ENCODE measurements at regions of chr6 and their contacts with region 1.

Region 1: DNA sequence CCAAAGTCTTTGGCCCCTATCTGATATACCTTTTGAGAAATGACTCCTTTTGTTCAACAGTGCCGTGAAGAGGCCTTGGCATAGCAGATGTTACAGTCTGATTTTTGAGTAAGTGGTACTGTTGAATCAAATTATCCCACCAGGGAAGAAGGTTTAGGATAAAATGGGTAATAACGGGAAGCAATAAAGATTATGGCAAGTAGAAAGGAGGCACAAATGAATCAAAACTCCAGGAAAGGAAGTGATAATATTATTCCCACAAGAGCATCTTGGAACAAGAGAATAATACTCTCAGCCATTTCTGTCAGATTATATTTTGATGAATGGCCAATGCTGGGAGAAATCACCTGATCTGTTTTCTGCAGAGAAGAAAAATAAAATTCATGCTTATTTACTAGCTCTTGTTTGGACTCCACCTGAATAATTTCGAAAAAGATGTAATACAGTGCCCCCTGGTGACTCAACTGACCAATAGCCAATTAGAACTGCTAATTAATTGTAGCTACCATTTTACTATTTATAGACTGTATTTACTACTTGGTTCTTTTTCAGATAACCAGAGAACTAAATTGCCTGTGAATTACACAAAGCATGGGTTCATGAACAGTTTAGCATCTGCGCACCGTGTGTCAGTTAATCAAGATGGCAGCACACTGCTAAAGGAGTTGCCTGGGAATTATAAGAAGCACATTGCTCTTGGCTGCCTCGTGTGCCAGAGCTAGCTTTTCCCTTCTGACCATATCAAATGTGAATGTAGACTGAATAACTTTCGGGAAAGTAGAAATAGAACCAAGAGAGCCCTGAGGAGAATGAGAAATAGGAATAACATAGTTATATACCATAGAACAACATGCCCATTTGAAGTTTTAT is 78.5 kb upstream of the TRDN start:
- DNase-seq: peak; percentile 39
- ATAC-seq: peak; percentile 58
- H3K4me3 ChIP-seq: no peak overlapping the region
- H3K27ac ChIP-seq: no peak overlapping the region
- H3K4me1 ChIP-seq: no peaks in the 10 kb centered on the region
- H3K27me3 ChIP-seq: no peaks in the 10 kb centered on the region
- CTCF ChIP-seq: peak; percentile 64
- EP300 ChIP-seq: no peak
- POLR2A ChIP-seq: no peak
- RAD21 ChIP-seq: peak; percentile 25; the same call in 1 of the 2 replicates

Region 2: GRCh38 chr6:123393328-123393727 is 321.9 kb before region 1 on chr6:
- CTCF ChIA-PET with region 1: interaction called, 3 read pairs
- POLR2A ChIA-PET with region 1: no interaction called
- in situ Hi-C with region 1: no loop called
- intact Hi-C with region 1: loop called (anchors 1 kb)
- DNase-seq: peak; percentile 6
- ATAC-seq: no peak
- H3K4me3 ChIP-seq: no peak overlapping the region
- H3K27ac ChIP-seq: no peak overlapping the region
- H3K4me1 ChIP-seq: no peaks in the 10 kb centered on the region
- H3K27me3 ChIP-seq: no peaks in the 10 kb centered on the region
- CTCF ChIP-seq: peak; percentile 26
- EP300 ChIP-seq: no peak
- POLR2A ChIP-seq: no peak
- RAD21 ChIP-seq: no peak

Region 3: GRCh38 chr6:123415844-123416468 is 299.3 kb before region 1 on chr6:
- CTCF ChIA-PET with region 1: interaction called, 27 read pairs
- POLR2A ChIA-PET with region 1: no interaction called
- in situ Hi-C with region 1: loop called (anchors 5 kb)
- intact Hi-C with region 1: loop called (anchors 1 kb)
- DNase-seq: peak; percentile 56
- ATAC-seq: peak; percentile 82
- H3K4me3 ChIP-seq: no peak overlapping the region
- H3K27ac ChIP-seq: no peak overlapping the region
- H3K4me1 ChIP-seq: no peaks in the 10 kb centered on the region
- H3K27me3 ChIP-seq: no peaks in the 10 kb centered on the region
- CTCF ChIP-seq: peak; percentile 73
- EP300 ChIP-seq: no peak
- POLR2A ChIP-seq: no peak
- RAD21 ChIP-seq: peak; percentile 50; the same call in 1 of the 2 replicates

Region 4: DNA sequence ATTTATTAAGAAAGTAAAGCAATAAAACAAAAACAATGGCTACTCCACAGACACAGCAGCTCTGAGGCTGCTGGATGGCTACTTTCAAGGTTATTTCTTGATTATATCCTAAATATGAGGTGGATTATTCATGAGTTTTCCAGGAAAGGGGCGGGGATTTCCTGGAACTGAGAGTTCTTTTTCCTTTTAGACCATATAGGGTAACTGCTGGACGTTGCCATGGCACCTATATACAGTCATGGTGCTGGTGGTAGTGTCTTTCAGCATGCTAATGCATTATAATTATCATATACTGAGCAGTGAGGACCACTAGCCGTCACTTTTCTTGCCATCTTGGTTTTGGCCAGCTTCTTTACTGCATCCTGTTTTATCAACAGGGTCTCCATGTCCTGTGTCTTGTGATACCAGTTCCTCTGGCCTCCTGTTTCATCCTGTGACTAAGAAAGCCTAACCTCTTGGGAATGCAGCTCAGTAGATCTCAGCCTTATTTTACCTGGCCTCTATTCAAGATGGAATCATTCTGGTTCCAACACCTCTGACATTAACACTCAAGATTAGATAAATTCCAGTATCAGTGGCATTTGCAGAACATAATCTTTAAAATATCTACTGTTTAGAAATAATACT is 46.2 kb before region 1 on chr6:
- CTCF ChIA-PET with region 1: no interaction called
- POLR2A ChIA-PET with region 1: no interaction called
- in situ Hi-C with region 1: no loop called
- intact Hi-C with region 1: no loop called
- DNase-seq: no peak
- ATAC-seq: no peak
- H3K4me3 ChIP-seq: no peak overlapping the region
- H3K27ac ChIP-seq: no peak overlapping the region
- H3K4me1 ChIP-seq: no peaks in the 10 kb centered on the region
- H3K27me3 ChIP-seq: no peaks in the 10 kb centered on the region
- CTCF ChIP-seq: no peak
- EP300 ChIP-seq: no peak
- POLR2A ChIP-seq: no peak
- RAD21 ChIP-seq: no peak

Region 5: GRCh38 chr6:123901436-123901835 is 186.2 kb after region 1 on chr6:
- CTCF ChIA-PET with region 1: no interaction called
- POLR2A ChIA-PET with region 1: no interaction called
- in situ Hi-C with region 1: no loop called
- intact Hi-C with region 1: no loop called
- DNase-seq: no peak
- ATAC-seq: no peak
- H3K4me3 ChIP-seq: no peak overlapping the region
- H3K27ac ChIP-seq: no peak overlapping the region
- H3K4me1 ChIP-seq: no peaks in the 10 kb centered on the region
- H3K27me3 ChIP-seq: no peaks in the 10 kb centered on the region
- CTCF ChIP-seq: no peak
- EP300 ChIP-seq: no peak
- POLR2A ChIP-seq: no peak
- RAD21 ChIP-seq: no peak

Measured in HepG2 (cell line).